Activated T-helper 2 cell treated with anti-CD3 and anti-CD28 coated beads, Interferon-gamma antibody, Interleukin-2, Interleukin-4, amounts not matched to agents 10 μg/mL and 5 μg/mL and 100 μg/mL, durations not matched to agents 14 hours and 24 hours and 36 hours (primary cell): ENCODE measurements at regions of chr7 and their contacts with region 1.

Region 1: DNA sequence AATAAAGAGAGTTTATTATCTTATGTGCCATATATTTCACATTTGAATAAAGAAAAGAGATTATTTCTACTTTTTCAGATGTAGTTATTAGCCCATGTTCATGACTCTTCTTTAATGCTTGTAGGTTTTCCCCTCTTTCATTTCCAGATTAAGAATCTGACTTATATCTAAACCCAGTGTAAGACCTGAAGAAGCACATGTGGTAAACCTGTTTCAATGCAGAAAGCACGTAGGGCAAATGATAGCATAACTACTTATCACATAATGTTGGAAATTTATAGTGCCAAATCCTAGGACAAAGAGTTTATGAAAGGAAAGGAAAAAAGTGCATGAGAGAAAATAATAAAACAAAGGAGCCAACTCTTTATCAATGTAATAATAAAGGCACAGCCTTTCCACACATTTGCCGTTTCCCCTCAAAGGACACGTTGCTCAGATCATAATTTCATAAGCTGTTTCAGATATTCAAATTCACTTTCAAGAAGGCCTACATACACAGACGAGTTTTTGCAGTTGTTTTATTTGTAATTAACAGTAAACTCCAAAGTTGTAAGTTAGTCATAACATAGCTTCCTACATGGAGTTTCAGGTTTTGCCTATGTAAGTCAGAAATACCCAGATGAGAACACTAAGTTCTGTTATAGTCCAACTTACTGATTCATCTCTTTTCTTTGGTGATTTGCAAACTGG is 88.8 kb upstream of the MDFIC start:
- DNase-seq: no peak
- H3K4me3 Mint-ChIP-seq: peak overlapping the region; percentile 56
- H3K27ac Mint-ChIP-seq: peak overlapping the region; percentile 98
- H3K4me1 Mint-ChIP-seq: peaks cover 46% of the 10 kb centered on the region
- H3K27me3 Mint-ChIP-seq: no peaks in the 10 kb centered on the region

Region 2: GRCh38 chr7:114715907-114716306 is 117.1 kb before region 1 on chr7:
- intact Hi-C with region 1: loop called (anchors 1 kb)
- DNase-seq: no peak
- H3K4me3 Mint-ChIP-seq: no peak overlapping the region
- H3K27ac Mint-ChIP-seq: peak overlapping the region; percentile 0
- H3K4me1 Mint-ChIP-seq: peaks cover 16% of the 10 kb centered on the region
- H3K27me3 Mint-ChIP-seq: no peaks in the 10 kb centered on the region

Region 3: DNA sequence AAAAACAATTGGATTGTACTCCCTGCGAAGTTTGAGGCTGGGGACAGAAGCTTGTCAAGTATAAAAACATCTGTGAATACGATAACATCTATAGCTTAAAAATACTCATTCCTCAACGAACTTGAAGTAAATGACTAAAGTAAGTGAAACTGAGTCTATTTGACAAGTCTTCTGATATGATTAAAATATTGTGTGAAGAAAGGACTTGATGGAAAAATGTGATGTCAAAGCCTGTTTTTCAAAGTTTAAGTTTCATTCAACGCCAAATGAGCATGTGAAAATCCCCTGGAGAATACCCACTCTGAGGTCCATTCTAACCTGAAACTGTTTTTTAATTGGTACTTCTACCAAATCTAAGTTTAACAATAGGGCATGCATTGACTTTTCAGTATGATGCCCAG is 33.4 kb before region 1 on chr7:
- intact Hi-C with region 1: loop called (anchors 1 kb)
- DNase-seq: no peak
- H3K4me3 Mint-ChIP-seq: no peak overlapping the region
- H3K27ac Mint-ChIP-seq: peak overlapping the region; percentile 95
- H3K4me1 Mint-ChIP-seq: peaks cover 58% of the 10 kb centered on the region
- H3K27me3 Mint-ChIP-seq: no peaks in the 10 kb centered on the region

Region 4: GRCh38 chr7:114856625-114857024 is 23.6 kb after region 1 on chr7:
- intact Hi-C with region 1: loop called (anchors 2 kb)
- DNase-seq: no peak
- H3K4me3 Mint-ChIP-seq: no peak overlapping the region
- H3K27ac Mint-ChIP-seq: no peak overlapping the region
- H3K4me1 Mint-ChIP-seq: peaks cover 8% of the 10 kb centered on the region
- H3K27me3 Mint-ChIP-seq: peaks cover 1% of the 10 kb centered on the region

Region 5: DNA sequence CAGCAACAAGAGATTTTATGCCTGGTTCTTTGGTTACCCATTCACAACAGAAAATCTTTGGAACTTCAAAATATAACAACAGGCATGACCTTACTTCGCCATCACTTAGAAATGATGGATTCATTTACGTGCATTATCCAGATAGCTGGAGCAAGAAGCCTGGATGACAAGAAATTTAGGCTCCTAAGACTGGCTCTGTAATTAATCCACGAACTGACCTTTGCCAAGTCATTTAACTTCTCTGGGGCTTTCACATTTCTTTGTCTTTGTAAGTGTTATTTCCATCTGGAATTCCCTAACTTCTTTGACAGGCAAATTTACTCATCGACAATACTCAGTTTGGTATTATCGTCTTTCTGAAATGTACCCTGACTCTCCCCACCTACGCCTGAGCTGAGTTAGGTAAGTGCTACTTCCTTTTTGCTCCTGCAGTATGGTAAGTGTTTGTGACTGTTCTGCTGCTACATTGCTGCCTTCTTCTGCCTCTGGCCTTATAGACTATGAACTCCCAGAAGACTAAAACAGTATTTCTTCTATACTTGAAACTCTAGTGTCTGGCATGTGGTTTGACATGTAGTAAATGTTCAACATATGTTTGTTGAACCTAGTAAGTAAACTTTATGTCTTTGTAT is 83.3 kb after region 1 on chr7:
- intact Hi-C with region 1: loop called (anchors 1 kb)
- DNase-seq: no peak
- H3K4me3 Mint-ChIP-seq: peak overlapping the region; percentile 58
- H3K27ac Mint-ChIP-seq: peak overlapping the region; percentile 98
- H3K4me1 Mint-ChIP-seq: peaks cover 47% of the 10 kb centered on the region
- H3K27me3 Mint-ChIP-seq: no peaks in the 10 kb centered on the region